Activated naive CD8-positive, alpha-beta T cell treated with anti-CD3 and anti-CD28 coated beads, Interleukin-2, amount 10 ng/mL, durations not matched to agents 7 days and 5 days (primary cell): ENCODE measurements at regions of chr6 and their contacts with region 1.

Region 1: GRCh38 chr6:10694302-10695085 is at the starts of genes C6orf52 and PAK1IP1:
- DNase-seq: peak; percentile 89
- ATAC-seq: peak; percentile 94
- H3K4me3 Mint-ChIP-seq: peak within 1 kb of the TSS; percentile 95
- H3K27ac Mint-ChIP-seq: peak within 1 kb of the TSS; percentile 99
- H3K4me1 Mint-ChIP-seq: peaks cover 31% of the 10 kb centered on the region
- H3K27me3 Mint-ChIP-seq: no peaks in the 10 kb centered on the region
- total RNA-seq, gene C6orf52: 0.54 to 3.0 TPM
- total RNA-seq, gene PAK1IP1: 11.1 to 11.6 TPM

Region 2: DNA sequence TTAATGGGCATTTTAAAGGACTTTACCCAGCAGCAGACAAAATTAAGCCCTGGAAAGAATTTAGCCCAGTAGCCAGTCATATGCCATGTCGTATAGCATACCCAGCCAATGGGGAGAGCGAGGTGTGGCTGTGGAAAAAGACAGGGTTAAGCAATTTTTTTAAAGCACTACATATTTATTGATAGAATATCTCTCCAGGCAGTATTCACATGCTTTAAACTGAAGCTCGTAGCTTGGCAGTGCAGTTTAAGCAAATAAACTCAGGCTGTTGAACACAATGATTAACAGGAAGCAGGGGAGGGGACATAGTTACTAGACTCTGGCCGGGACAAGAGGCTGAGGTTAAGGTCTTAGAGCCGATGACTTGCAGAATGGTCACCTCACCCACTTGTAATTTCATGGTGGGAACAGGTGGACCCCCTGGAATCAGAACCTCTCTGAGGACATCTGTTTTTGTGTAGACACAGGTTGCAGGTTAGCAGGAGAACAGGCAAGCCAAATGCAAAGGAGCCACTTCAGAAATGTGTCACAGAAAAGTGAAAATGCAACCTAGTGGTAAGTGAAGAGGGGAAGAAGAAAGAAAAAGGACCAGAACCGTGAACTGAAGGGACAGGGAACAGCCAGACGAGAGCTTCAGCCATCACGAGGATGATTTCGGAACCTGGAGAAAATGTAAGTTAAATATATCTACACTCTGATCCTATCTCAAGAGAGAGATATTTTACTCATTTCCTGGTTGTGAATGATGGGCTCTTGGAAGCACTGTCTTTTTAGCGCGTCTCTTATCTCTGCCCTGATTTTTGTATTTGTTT is 166.1 kb before region 1 on chr6:
- POLR2A ChIA-PET with region 1: interaction called, 16 read pairs
- DNase-seq: peak; percentile 47
- ATAC-seq: peak; percentile 68
- H3K4me3 Mint-ChIP-seq: peak overlapping the region; percentile 92
- H3K27ac Mint-ChIP-seq: peak overlapping the region; percentile 93
- H3K4me1 Mint-ChIP-seq: peaks cover 36% of the 10 kb centered on the region
- H3K27me3 Mint-ChIP-seq: no peaks in the 10 kb centered on the region

Region 3: DNA sequence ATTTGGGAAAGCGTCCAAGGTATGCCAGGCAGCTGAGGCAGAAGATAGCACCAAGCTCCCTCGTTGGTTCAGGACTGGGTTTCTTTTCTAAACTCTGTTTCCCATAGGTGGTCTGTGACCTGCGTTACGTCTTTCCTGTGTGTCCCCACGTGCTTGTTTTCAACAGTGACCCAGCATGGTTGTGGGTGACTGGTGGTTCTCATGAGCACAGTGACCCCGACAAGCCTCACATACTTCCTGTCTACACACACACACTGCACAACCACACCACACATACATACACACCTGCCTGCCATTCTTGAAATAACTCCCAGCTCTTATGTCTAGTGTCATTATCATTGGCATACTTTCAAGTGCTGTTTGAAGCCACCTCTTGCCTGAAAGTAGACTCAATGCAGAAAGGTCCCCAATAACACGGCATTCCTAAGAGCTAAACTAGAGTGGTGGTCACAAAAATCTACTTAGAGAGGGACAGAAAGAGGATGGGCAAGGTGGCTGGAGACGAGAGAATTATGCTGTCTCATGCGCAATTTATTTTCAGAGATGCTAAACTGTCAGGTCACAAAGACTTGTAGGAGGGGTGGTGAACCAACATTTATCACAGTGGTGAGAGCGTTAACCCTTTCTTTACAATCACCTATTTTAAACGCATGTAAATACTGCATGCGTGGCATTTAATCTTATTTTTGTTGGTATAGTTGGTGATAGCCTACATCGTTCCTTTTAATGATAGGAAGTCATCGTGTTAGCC is 106.7 kb before region 1 on chr6:
- POLR2A ChIA-PET with region 1: interaction called, 11 read pairs
- DNase-seq: peak; percentile 35
- ATAC-seq: peak; percentile 73
- H3K4me3 Mint-ChIP-seq: no peak overlapping the region
- H3K27ac Mint-ChIP-seq: no peak overlapping the region
- H3K4me1 Mint-ChIP-seq: peaks cover 30% of the 10 kb centered on the region
- H3K27me3 Mint-ChIP-seq: no peaks in the 10 kb centered on the region

Region 4: GRCh38 chr6:10682355-10682988 is 12.0 kb before region 1 on chr6:
- POLR2A ChIA-PET with region 1: interaction called, 19 read pairs
- DNase-seq: no peak
- ATAC-seq: peak; percentile 61
- H3K4me3 Mint-ChIP-seq: peak overlapping the region; percentile 40
- H3K27ac Mint-ChIP-seq: peak overlapping the region; percentile 75
- H3K4me1 Mint-ChIP-seq: peaks cover 42% of the 10 kb centered on the region
- H3K27me3 Mint-ChIP-seq: no peaks in the 10 kb centered on the region

Region 5: DNA sequence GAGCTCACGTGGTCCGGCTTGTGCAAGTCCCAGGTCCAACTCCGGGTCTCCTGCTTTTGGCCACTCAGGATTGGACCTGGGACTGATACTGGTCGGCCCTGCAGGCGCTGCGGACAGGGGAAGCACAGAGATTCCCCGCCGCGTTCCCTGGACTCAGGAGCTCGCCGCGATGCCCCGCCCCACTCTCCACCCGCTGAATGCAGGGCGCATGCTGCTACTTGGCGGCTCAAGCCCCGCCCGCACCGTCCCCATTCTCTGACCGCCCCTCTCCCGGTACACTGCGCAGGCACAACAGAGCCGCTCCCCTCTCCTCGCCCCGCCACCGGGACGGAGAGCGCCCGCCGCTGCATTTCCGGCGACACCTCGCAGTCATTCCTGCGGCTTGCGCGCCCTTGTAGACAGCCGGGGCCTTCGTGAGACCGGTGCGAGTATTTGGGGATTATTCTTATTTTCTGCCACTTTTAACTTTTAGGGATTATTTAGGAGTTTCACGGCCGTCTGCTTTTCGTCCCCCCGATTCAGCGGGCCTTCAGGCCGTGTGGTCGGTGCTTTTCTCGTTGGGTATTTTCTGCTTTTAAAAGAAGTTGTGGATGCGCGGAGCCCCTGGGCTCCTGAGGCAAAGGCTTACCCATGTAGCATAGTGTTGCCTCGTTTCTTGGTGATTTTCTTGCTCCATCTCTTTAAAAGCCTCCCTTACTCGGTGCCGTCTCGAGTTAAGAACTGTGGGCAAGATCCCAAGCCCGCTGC is 28.5 kb after region 1 on chr6 and contains the start of gene TMEM14C:
- POLR2A ChIA-PET with region 1: interaction called, 90 read pairs
- DNase-seq: peak; percentile 84
- ATAC-seq: peak; percentile 89
- H3K4me3 Mint-ChIP-seq: peak within 1 kb of the TSS; percentile 92
- H3K27ac Mint-ChIP-seq: peak within 1 kb of the TSS; percentile 96
- H3K4me1 Mint-ChIP-seq: peaks cover 34% of the 10 kb centered on the region
- H3K27me3 Mint-ChIP-seq: no peaks in the 10 kb centered on the region
- total RNA-seq, gene TMEM14C: 41.5 to 44.2 TPM

Region 6: DNA sequence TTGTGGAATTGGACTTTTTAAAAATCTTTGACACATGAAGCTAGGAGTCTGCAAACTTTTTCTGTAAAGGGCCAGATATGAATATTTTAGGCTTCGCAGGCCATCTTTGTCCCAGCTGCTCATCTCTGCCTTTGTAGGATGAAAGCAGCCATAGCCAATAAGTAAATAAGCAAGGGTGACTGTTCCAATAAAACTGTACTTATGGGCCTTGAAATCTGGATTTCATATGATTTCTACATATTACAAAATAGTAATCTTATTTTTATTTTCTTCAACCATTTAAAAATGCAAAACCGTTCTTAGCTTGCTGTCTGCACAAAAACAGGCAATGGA is 40.5 kb after region 1 on chr6:
- POLR2A ChIA-PET with region 1: no interaction called
- DNase-seq: no peak
- ATAC-seq: no peak
- H3K4me3 Mint-ChIP-seq: no peak overlapping the region
- H3K27ac Mint-ChIP-seq: no peak overlapping the region
- H3K4me1 Mint-ChIP-seq: no peaks in the 10 kb centered on the region
- H3K27me3 Mint-ChIP-seq: no peaks in the 10 kb centered on the region

Region 7: GRCh38 chr6:10747251-10747972 is 52.9 kb after region 1 on chr6 and contains the start of gene TMEM14B:
- POLR2A ChIA-PET with region 1: interaction called, 32 read pairs
- DNase-seq: peak; percentile 100
- ATAC-seq: peak; percentile 98
- H3K4me3 Mint-ChIP-seq: peak within 1 kb of the TSS; percentile 97
- H3K27ac Mint-ChIP-seq: peak within 1 kb of the TSS; percentile 86
- H3K4me1 Mint-ChIP-seq: peaks cover 33% of the 10 kb centered on the region
- H3K27me3 Mint-ChIP-seq: no peaks in the 10 kb centered on the region
- total RNA-seq, gene TMEM14B: 81.6 to 90.7 TPM

Region 8: GRCh38 chr6:10801536-10801848 is 107.0 kb after region 1 on chr6:
- POLR2A ChIA-PET with region 1: no interaction called
- DNase-seq: no peak
- ATAC-seq: no peak
- H3K4me3 Mint-ChIP-seq: no peak overlapping the region
- H3K27ac Mint-ChIP-seq: no peak overlapping the region
- H3K4me1 Mint-ChIP-seq: no peaks in the 10 kb centered on the region
- H3K27me3 Mint-ChIP-seq: no peaks in the 10 kb centered on the region